CD8-positive, alpha-beta memory T cell (primary cell): ENCODE measurements at regions of chr15 and their contacts with region 1.

Region 1: GRCh38 chr15:90387537-90388461 is at the start of gene IQGAP1:
- DNase-seq: peak; percentile 92 to 97 (median 94)
- H3K4me3 ChIP-seq: peak within 1 kb of the TSS; percentile 87
- H3K4me3 Mint-ChIP-seq: peak within 1 kb of the TSS; percentile 86 to 96 (median 91)
- H3K27ac ChIP-seq: peak within 1 kb of the TSS; percentile 94
- H3K27ac Mint-ChIP-seq: peak within 1 kb of the TSS; percentile 86 to 97 (median 96)
- H3K4me1 ChIP-seq: peaks cover 38% of the 10 kb centered on the region
- H3K4me1 Mint-ChIP-seq: peaks cover 45 to 59% (median 49%) of the 10 kb centered on the region in 3 donors
- H3K27me3 ChIP-seq: no peaks in the 10 kb centered on the region
- H3K27me3 Mint-ChIP-seq: no peaks in the 10 kb centered on the region
- total RNA-seq, gene IQGAP1: 173 to 176 TPM

Region 2: DNA sequence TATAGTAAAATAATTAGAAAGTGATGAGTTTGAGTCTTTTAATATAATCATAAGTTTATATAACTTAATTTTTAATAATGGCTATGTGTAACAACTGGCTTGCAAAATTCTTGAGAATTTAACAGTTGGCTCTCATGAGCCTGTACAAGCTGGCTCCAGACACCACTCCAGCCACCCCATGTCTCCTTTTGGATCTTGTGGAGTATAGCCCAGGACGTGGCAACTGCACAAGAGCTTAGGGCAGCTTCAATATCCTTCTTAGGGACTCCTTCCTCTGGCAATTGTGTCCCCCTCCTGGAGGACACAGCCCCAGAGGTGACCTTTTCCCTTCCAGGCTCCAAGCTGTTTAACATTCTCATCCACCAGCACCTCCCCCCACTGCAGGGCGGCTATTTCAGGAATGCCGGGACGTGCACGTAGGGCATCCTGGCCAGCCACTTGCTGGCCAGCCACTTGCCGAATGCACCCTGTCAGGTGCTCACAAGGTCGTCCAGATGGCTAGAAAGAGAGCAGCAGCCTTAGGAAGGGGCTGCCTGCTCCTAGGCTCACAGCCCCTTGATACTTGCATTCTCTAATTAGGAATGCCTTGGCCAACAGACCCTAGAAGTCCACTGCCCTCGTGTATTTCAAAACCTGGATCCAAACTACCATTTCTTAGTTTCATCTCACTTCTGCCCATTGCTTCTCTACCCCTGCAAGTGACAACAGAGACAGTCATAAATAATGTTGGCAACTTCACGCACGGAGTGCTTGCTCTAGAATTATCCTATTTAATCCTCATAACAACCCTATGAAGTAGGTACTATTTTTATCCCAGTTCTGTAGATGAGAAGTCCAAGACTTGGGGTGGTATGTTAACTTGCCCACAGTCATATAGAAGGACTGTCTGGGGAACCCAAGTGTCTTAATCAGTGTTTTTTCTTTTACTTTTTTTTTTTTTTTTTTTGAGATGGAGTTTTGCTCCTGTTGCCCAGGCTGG is 261.1 kb before region 1 on chr15:
- CTCF ChIA-PET with region 1: no interaction called
- POLR2A ChIA-PET with region 1: no interaction called
- DNase-seq: no peak
- H3K4me3 ChIP-seq: no peak overlapping the region
- H3K4me3 Mint-ChIP-seq: no peak overlapping the region
- H3K27ac ChIP-seq: no peak overlapping the region
- H3K27ac Mint-ChIP-seq: no peak overlapping the region
- H3K4me1 ChIP-seq: no peaks in the 10 kb centered on the region
- H3K4me1 Mint-ChIP-seq: no peaks in the 10 kb centered on the region
- H3K27me3 ChIP-seq: no peaks in the 10 kb centered on the region
- H3K27me3 Mint-ChIP-seq: peaks cover 4 to 12% of the 10 kb centered on the region in 2 donors

Region 3: DNA sequence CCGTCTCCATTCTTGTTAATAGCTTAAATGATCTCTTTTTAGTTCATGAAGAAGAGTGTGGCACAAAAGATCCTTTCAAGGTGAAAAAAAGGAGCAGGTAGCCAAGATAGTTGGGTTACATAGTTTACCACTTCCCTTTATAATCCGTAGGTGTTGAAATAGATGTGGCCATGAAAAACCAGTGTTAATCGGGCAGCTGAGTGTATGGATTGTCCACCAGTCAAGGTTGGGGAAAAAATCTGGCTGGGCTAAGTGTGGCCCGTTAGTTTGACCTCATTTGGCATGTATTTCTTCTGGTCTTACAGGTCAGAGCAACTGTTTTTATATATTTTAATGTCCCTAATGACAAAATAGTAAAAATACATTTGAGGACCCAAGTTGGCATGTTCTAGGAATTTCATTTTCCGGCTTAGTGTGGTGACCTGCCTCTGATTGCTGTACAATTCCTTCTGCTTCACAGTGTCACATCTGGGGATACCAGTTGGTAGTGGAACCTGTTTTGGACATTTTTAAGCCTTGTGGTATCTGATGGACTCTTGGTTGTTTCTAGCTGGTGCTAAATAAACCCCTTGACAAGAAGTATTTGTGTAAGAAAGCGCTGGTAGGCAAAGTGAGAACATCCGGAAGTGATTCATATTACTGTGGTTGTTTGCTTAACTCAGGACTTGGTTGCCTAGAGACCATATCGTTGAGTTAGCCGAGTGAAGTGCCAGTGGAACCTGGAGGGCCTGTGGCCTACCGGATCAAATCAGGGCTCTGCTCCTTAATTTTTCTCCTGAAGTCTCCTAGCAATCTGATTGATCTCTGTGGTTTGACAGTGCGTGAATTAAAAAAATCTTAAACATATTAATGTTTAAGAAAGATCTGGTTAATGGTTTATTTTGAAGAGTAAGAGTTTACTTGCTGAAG is 12.9 kb after region 1 on chr15:
- CTCF ChIA-PET with region 1: interaction called, 4 read pairs
- POLR2A ChIA-PET with region 1: interaction called, 46 read pairs
- DNase-seq: peak; percentile 48 to 85 (median 84)
- H3K4me3 ChIP-seq: peak overlapping the region; percentile 23
- H3K4me3 Mint-ChIP-seq: peak overlapping the region; percentile 40 to 93 (median 79)
- H3K27ac ChIP-seq: peak overlapping the region; percentile 91
- H3K27ac Mint-ChIP-seq: peak overlapping the region; percentile 96 to 100 (median 99)
- H3K4me1 ChIP-seq: peaks cover 48% of the 10 kb centered on the region
- H3K4me1 Mint-ChIP-seq: peaks cover 60 to 88% (median 83%) of the 10 kb centered on the region in 3 donors
- H3K27me3 ChIP-seq: no peaks in the 10 kb centered on the region
- H3K27me3 Mint-ChIP-seq: no peaks in the 10 kb centered on the region

Region 4: DNA sequence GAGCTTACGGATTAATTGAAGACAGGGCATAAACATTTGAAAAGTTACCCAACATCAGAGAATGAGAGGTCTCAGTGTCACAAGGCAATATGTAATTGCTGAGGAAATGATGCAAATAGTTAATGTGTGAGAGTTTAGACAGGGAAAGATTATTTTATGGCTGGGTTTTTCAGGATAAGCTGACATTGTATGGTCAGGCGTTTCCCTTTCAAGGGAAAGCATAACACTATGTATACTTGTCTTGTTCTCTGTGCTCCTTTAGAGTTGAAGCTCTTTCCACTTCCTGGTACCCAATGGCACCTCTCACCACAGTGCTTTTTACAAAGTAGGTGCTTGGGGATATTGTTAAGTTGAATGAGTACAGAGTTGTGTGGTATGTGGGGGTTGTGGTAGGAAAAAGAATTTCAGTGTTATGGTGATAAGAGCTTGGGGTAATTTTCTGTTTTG is 20.1 kb after region 1 on chr15:
- CTCF ChIA-PET with region 1: interaction called, 10 read pairs
- POLR2A ChIA-PET with region 1: interaction called, 21 read pairs
- DNase-seq: peak in 4 of 5 donors; percentile 21 to 76 (median 45)
- H3K4me3 ChIP-seq: no peak overlapping the region
- H3K4me3 Mint-ChIP-seq: peak overlapping the region; percentile 29 to 81 (median 56)
- H3K27ac ChIP-seq: peak overlapping the region; percentile 21
- H3K27ac Mint-ChIP-seq: peak overlapping the region; percentile 19 to 98 (median 68)
- H3K4me1 ChIP-seq: peaks cover 53% of the 10 kb centered on the region
- H3K4me1 Mint-ChIP-seq: peaks cover 72 to 90% (median 89%) of the 10 kb centered on the region in 3 donors
- H3K27me3 ChIP-seq: no peaks in the 10 kb centered on the region
- H3K27me3 Mint-ChIP-seq: no peaks in the 10 kb centered on the region